ENCODE measurements at regions of chr17 and their contacts with region 1.

Region 1: GRCh38 chr17:47821424-47822391 is at the start of gene OSBPL7:
- DNase-seq: peak; percentile 94
- ATAC-seq: peak; percentile 91
- H3K4me3 ChIP-seq: peak within 1 kb of the TSS; percentile 74
- H3K27ac ChIP-seq: peak within 1 kb of the TSS; percentile 52
- H3K4me1 ChIP-seq: peaks cover 25% of the 10 kb centered on the region
- H3K27me3 ChIP-seq: no peaks in the 10 kb centered on the region
- CTCF ChIP-seq: peak; percentile 71
- total RNA-seq, gene OSBPL7: 18.4 and 22.1 TPM in 2 replicates

Region 2: GRCh38 chr17:46108550-46109110 is 1713.1 kb before region 1 on chr17:
- CTCF ChIA-PET with region 1: no interaction called
- POLR2A ChIA-PET with region 1: no interaction called
- intact Hi-C with region 1: no loop called
- DNase-seq: peak; percentile 57
- ATAC-seq: peak; percentile 63
- H3K4me3 ChIP-seq: peak overlapping the region; percentile 6; the same call in 1 of the 2 replicates
- H3K27ac ChIP-seq: peak overlapping the region; percentile 38
- H3K4me1 ChIP-seq: peaks cover 31% of the 10 kb centered on the region
- H3K27me3 ChIP-seq: no peaks in the 10 kb centered on the region
- CTCF ChIP-seq: no peak

Region 3: GRCh38 chr17:47660064-47660492 is 161.6 kb before region 1 on chr17:
- CTCF ChIA-PET with region 1: no interaction called
- POLR2A ChIA-PET with region 1: interaction called, 14 read pairs
- intact Hi-C with region 1: no loop called
- DNase-seq: no peak
- ATAC-seq: 0 out of 2 replicates have a peak, but pooled peaks have one; percentile 34
- H3K4me3 ChIP-seq: no peak overlapping the region
- H3K27ac ChIP-seq: no peak overlapping the region
- H3K4me1 ChIP-seq: 0 out of 2 replicates have a peak, but pooled peaks cover 2% of the 10 kb centered on the region
- H3K27me3 ChIP-seq: no peaks in the 10 kb centered on the region
- CTCF ChIP-seq: no peak

Region 4: GRCh38 chr17:47810205-47810821 is 11.4 kb before region 1 on chr17:
- CTCF ChIA-PET with region 1: no interaction called
- POLR2A ChIA-PET with region 1: no interaction called
- intact Hi-C with region 1: loop called (anchors 1 kb)
- DNase-seq: peak; percentile 95
- ATAC-seq: peak; percentile 92
- H3K4me3 ChIP-seq: no peak overlapping the region
- H3K27ac ChIP-seq: peak overlapping the region; percentile 46
- H3K4me1 ChIP-seq: peaks cover 23% of the 10 kb centered on the region
- H3K27me3 ChIP-seq: no peaks in the 10 kb centered on the region
- CTCF ChIP-seq: no peak

Region 5: DNA sequence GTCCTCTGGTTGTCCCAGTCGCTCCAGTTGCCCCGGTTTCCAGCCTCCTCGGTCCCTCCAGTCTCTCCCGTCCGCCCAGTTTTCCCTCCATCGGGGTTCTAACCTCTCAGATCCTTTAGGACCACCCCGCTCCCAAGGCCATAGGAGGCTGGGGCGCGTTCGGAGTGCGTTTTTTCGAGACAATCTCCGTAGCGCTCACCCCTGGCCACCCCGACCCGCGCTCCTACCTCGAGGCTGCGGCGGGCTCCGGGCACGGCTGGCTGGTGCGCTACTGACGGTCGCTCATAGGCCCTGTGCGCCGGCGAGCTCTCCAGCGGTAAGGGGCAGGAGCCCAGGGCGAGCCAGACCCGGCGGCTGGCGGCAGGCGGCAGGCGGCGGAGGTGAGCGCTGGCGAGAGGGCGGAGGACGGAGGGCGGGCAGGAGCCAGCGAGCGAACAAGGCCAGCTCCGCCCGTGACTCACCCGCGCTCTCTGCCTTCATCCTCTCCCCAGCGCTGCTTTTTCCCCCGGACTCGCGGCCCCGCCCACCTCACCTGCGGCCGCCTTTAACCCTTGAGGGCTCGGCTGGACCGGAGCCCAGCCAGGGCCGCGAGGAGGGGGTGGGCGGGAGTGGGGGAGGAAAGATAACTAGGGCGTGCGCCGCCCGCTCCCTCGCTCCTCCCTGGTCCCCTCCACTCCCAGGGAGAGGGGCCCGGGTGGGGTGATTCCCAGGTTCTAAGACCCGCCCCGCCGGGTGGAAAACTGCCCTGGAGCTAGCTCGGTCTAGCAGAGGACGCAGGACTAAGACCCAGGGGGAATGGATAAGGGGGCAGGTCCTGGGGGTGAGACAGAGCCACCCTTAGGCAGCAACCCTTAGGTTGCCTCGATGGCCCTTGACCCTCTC is 29.2 kb after region 1 on chr17 and contains the start of gene SP6:
- CTCF ChIA-PET with region 1: no interaction called
- POLR2A ChIA-PET with region 1: no interaction called
- intact Hi-C with region 1: no loop called
- DNase-seq: peak; percentile 93
- ATAC-seq: peak; percentile 97
- H3K4me3 ChIP-seq: peak within 1 kb of the TSS; percentile 88
- H3K27ac ChIP-seq: no peak within 1 kb of the TSS
- H3K4me1 ChIP-seq: peaks cover 16% of the 10 kb centered on the region
- H3K27me3 ChIP-seq: peaks cover 13% of the 10 kb centered on the region
- CTCF ChIP-seq: peak; percentile 38; the same call in 1 of the 2 replicates
- total RNA-seq, gene SP6: 3.1 and 3.9 TPM in 2 replicates

Region 6: GRCh38 chr17:47949136-47949759 is 127.5 kb after region 1 on chr17:
- CTCF ChIA-PET with region 1: no interaction called
- POLR2A ChIA-PET with region 1: interaction called, 13 read pairs
- intact Hi-C with region 1: no loop called
- DNase-seq: peak; percentile 94
- ATAC-seq: peak; percentile 69
- H3K4me3 ChIP-seq: peak overlapping the region; percentile 49
- H3K27ac ChIP-seq: peak overlapping the region; percentile 96
- H3K4me1 ChIP-seq: peaks cover 34% of the 10 kb centered on the region
- H3K27me3 ChIP-seq: no peaks in the 10 kb centered on the region
- CTCF ChIP-seq: peak; percentile 99